ENCODE measurements at regions of chr15 and their contacts with region 1.

Region 1: DNA sequence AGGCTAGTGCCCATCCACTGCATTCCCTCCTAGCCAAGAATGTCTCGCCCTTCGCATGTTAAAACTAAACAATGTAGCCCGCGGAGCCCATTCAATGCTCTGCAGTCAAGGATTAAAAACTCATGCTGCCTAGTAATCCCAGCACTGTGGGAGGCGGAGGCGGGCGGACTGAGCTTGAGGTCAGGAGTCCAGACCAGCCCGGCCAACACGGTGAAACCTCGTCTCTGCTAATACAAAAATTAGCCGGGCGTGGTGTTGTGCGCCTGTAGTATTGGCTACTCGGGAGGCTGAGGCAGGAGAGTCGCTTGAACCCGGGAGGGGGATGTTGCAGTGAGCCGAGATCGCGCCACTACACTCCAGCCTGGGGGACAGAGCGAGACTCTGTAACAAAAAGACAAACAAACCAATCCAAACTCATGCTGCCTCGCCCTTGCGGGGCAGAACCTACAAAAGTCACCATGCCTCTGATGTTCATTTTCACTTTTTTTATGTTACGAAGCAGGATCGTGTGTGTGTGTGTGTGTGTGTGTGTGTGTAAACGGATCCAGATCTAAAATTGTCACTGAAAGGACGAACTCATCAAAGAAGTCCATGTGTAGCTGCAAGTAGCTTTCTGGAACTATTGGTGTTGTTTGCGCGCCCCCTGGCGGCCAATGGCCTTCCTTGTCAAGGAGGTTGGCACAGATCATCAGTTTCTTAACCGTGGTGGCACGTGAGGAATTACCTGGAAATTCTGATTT is 54.8 kb upstream of the SPESP1 start:
- DNase-seq: peak; percentile 76
- H3K4me3 Mint-ChIP-seq: no peak overlapping the region
- H3K27ac Mint-ChIP-seq: no peak overlapping the region
- H3K4me1 Mint-ChIP-seq: peaks cover 5% of the 10 kb centered on the region
- H3K27me3 Mint-ChIP-seq: peaks cover 31% of the 10 kb centered on the region

Region 2: DNA sequence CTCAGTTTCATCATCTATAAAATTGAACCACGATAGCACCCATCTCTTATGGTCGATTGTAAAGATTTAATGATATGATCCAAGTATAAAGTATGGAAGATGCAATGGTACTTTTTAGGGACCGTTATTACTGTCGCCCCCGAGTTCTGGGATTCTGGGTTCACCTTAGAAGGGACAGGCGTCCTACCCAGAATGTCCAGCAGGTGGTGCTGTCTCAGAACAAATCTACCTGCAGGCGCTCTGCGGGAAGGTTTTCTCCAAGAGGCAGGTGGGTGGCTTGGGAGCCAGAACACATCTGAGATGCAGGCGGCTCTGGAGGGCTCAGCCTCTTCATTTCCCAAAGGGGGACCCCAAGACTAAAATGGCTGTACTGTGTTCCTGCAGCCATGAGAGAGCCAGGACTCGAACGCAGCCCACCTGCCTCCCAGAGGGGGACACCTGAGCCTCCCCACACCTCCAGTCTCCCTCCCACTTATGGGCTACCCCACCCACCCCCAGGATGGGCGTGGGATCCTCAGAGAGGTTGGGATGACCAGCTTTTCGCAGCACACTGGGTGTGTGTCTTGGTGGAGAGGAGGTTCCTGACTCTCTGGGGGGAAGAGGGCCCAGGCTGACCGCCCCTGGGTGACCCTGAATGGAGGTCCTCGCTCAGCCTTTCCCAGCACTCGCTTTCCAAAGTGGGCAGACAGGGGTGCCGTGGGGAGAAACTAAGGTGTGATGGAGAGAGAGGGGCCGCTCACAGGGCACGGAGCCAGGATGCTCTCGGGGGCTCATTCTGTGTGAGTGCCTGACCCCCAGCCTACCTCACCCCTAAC is 324.9 kb before region 1 on chr15:
- intact Hi-C with region 1: loop called (anchors 1 kb)
- DNase-seq: peak; percentile 50
- H3K4me3 Mint-ChIP-seq: no peak overlapping the region
- H3K27ac Mint-ChIP-seq: no peak overlapping the region
- H3K4me1 Mint-ChIP-seq: peaks cover 11% of the 10 kb centered on the region
- H3K27me3 Mint-ChIP-seq: peaks cover 29% of the 10 kb centered on the region

Region 3: DNA sequence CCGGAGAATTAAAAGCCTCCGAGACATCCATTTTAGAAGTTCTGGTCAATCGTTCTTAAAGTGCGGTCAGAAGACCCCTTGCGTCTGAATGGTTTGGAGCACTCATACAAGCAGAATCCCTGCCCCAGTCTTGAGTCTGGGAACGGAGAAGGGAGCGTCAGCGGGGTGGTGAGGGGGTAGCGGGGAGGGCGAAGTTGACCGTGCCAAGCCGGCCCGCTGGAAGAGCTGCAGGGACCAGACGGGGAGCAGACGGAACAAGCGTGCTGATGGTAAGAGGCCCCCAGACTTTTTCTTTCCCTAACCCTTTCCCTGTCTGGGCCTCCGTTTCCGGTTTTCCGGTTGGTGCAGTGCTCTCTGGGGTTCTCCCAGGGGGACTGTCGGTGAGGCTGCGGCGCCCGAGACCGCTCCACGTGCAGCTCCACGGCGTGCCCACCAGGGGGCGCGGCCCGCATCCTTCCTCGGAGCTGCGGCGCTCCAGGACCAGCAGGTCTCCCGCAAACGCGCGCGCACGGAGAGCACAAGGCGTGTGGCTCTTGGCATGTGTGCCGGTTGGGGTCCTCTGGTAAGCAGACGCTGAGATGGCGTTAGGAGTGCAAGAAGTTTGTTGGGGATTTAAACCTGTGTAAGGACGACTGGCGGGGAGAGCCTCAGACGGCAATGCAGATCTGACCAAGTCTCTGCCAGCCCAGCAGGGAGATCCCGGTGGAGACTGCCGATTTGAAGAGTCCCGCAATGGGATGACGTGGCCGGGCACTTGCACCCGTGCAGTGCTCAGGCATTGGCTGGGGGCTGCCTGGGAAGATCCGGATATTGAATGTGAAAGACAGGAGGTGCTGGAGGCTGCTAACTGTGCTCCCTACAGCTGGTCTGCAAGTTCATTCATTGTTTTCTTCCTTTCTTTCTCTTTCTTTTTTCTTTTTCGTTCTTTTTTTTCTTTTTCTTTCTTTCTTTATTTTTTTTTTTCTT is 315.9 kb before region 1 on chr15:
- intact Hi-C with region 1: loop called (anchors 1 kb)
- DNase-seq: peak; percentile 63
- H3K4me3 Mint-ChIP-seq: peak overlapping the region; percentile 65
- H3K27ac Mint-ChIP-seq: no peak overlapping the region
- H3K4me1 Mint-ChIP-seq: peaks cover 18% of the 10 kb centered on the region
- H3K27me3 Mint-ChIP-seq: peaks cover 56% of the 10 kb centered on the region

Region 4: GRCh38 chr15:68674975-68675374 is 200.6 kb before region 1 on chr15:
- intact Hi-C with region 1: loop called (anchors 1 kb)
- DNase-seq: no peak
- H3K4me3 Mint-ChIP-seq: no peak overlapping the region
- H3K27ac Mint-ChIP-seq: no peak overlapping the region
- H3K4me1 Mint-ChIP-seq: no peaks in the 10 kb centered on the region
- H3K27me3 Mint-ChIP-seq: peaks cover 9% of the 10 kb centered on the region

Region 5: DNA sequence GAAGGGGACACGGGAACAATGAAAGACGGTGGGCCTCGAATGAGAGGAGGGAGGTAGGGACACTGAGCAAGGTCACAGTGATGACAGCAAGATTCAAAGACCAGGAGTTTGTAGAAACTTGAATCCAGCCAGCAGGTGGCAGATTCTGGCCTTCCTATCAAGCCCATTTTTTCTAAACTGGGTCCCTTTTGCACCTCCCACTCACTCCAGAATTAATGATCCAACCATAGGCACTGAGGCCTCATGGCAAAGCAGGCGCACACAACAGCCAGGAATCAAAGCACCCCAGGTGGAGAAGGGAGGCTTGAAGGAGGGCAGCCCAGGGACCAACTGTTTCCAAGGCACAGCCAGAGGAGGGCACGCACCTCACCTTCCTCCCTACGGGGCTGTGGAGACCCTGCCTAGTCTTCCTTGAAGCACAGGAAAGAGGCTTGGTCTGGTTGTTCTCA is 145.1 kb before region 1 on chr15:
- intact Hi-C with region 1: loop called (anchors 1 kb)
- DNase-seq: no peak
- H3K4me3 Mint-ChIP-seq: no peak overlapping the region
- H3K27ac Mint-ChIP-seq: no peak overlapping the region
- H3K4me1 Mint-ChIP-seq: peaks cover 5% of the 10 kb centered on the region
- H3K27me3 Mint-ChIP-seq: peaks cover 11% of the 10 kb centered on the region

Region 6: DNA sequence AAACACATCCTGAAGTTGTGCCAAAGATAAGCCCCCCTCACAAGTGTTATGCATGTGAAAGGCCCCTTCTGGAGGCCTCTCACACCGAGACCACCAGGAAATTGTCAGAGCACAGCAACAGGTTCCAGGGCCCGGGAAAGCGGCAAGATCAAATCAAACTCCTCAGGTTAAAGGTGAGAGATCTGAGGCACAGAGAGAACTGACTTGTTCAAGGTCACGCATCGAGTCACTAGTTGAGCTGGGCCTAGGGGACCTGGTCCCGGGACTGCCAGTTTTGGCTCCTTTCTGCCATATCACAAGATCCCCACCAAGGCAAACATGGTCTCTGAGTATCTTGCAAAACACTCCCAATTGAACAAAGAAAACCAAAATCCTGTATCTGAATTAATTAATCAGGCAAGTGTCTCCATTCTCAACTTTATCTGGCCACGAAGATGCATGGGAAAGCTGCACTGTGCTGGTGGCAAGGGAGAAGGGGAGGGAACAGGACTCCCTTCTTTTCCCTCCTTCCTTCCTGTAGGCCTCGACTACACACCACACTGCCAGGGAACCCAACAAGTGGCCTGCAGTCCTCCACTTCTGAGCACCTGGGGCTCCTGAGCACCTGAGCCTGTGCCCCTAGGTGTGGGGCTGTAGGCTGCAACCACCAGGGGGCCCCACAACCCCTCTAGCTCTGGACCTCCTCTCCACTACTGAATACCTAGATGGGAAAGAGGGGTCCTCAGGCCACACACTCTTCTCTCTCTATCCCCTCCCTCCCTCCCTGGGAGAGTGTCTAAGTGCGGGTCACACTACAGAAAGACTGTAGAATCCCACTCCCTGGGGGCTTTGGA is 92.1 kb before region 1 on chr15:
- intact Hi-C with region 1: loop called (anchors 1 kb)
- DNase-seq: peak; percentile 31
- H3K4me3 Mint-ChIP-seq: no peak overlapping the region
- H3K27ac Mint-ChIP-seq: peak overlapping the region; percentile 87
- H3K4me1 Mint-ChIP-seq: peaks cover 49% of the 10 kb centered on the region
- H3K27me3 Mint-ChIP-seq: no peaks in the 10 kb centered on the region

Region 7: GRCh38 chr15:68829068-68829467 is 46.5 kb before region 1 on chr15:
- intact Hi-C with region 1: loop called (anchors 5 kb)
- DNase-seq: no peak
- H3K4me3 Mint-ChIP-seq: no peak overlapping the region
- H3K27ac Mint-ChIP-seq: no peak overlapping the region
- H3K4me1 Mint-ChIP-seq: peaks cover 21% of the 10 kb centered on the region
- H3K27me3 Mint-ChIP-seq: peaks cover 5% of the 10 kb centered on the region

Region 8: DNA sequence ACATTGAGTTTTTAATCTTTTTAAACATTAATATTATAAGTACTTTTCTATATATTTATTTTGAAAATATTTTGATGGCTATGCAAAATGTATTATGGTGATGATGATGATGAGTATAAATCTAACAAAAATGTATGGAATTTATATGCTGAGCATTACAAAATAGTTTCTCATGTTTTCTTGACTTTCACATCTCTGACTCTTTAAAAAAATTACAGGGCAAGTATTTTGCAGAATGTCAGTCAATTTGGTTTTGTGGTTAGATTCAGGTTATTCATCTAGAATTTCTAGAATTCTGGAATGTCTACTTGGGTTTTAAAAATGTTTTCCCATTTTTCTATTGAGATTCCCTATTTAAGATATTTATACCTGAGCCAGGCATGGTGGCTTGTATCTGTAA is 13.1 kb before region 1 on chr15:
- intact Hi-C with region 1: no loop called
- DNase-seq: no peak
- H3K4me3 Mint-ChIP-seq: no peak overlapping the region
- H3K27ac Mint-ChIP-seq: no peak overlapping the region
- H3K4me1 Mint-ChIP-seq: no peaks in the 10 kb centered on the region
- H3K27me3 Mint-ChIP-seq: peaks cover 4% of the 10 kb centered on the region